Activated CD8-positive, alpha-beta memory T cell treated with anti-CD3 and anti-CD28 coated beads, Interleukin-2, amount 10 ng/mL, durations not matched to agents 7 days and 5 days (primary cell): ENCODE measurements at regions of chr19 and their contacts with region 1.

Region 1: GRCh38 chr19:6125571-6125989 is 9.9 kb upstream of the ACSBG2 start:
- DNase-seq: peak; percentile 75
- ATAC-seq: peak; percentile 72
- H3K4me3 Mint-ChIP-seq: no peak overlapping the region
- H3K27ac Mint-ChIP-seq: no peak overlapping the region
- H3K4me1 Mint-ChIP-seq: no peaks in the 10 kb centered on the region
- H3K27me3 Mint-ChIP-seq: peaks cover 4% of the 10 kb centered on the region

Region 2: DNA sequence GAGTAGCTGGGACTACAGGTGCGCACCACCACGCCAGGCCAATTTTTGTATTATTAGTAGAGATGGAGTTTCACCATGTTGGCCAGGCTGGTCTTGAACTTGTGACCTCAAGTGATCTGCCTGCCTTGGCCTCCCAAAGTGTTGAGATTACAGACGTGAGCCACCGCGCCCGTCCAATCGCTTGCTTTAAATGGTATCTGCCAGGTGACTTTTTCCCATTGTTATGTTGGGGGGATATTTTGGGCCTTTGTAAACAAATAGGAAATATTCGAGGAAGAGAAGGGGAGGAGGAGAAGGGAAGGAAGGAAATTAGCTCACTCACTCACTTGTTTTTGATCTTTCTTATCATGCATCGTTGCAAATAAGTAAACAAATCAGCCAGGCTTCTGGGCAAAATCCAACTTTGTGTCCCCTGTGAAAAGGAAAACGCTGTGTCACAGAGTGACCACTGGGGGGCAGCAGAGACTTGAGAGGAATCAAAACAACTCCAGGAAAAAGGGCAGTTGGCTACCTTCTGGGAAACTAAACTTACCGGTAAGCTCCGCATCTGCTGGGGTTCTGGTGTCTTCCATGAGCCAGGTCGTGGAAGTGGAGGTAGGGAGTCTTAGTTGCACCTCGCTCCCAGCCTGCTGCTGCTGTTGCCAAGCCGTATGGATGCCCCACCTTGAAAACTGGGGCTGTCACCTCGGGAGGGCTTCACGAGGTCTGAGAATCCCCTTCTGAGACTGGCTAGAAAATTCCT is 138.3 kb before region 1 on chr19:
- CTCF ChIA-PET with region 1: interaction called, 22 read pairs
- DNase-seq: peak; percentile 82
- ATAC-seq: peak; percentile 22
- H3K4me3 Mint-ChIP-seq: peak overlapping the region; percentile 64
- H3K27ac Mint-ChIP-seq: peak overlapping the region; percentile 72
- H3K4me1 Mint-ChIP-seq: peaks cover 46% of the 10 kb centered on the region
- H3K27me3 Mint-ChIP-seq: no peaks in the 10 kb centered on the region

Region 3: GRCh38 chr19:6048808-6049405 is 76.7 kb before region 1 on chr19:
- CTCF ChIA-PET with region 1: interaction called, 114 read pairs
- DNase-seq: peak; percentile 81
- ATAC-seq: peak; percentile 100
- H3K4me3 Mint-ChIP-seq: no peak overlapping the region
- H3K27ac Mint-ChIP-seq: no peak overlapping the region
- H3K4me1 Mint-ChIP-seq: peaks cover 4% of the 10 kb centered on the region
- H3K27me3 Mint-ChIP-seq: peaks cover 13% of the 10 kb centered on the region

Region 4: DNA sequence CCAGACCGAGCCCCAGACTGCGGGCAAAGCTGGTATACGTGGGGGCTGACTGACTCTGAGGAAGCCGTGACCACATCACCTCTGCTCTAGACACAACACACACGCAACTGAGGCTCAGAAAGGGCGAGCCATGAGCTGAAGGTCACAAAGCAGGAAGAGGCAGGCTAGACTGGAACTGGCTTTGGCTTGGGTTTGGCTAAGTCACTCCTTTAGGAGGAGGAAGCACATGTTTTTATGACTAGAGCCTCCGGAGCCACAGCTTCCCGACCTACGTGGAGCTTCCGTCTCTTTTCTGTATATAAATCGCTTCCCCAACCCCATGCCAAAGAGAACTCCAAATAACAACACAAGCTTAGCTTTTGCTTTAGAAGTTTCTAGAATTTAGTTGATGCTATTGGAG is 63.3 kb before region 1 on chr19:
- CTCF ChIA-PET with region 1: interaction called, 11 read pairs
- DNase-seq: peak; percentile 62
- ATAC-seq: peak; percentile 44
- H3K4me3 Mint-ChIP-seq: no peak overlapping the region
- H3K27ac Mint-ChIP-seq: no peak overlapping the region
- H3K4me1 Mint-ChIP-seq: peaks cover 37% of the 10 kb centered on the region
- H3K27me3 Mint-ChIP-seq: peaks cover 15% of the 10 kb centered on the region

Region 5: DNA sequence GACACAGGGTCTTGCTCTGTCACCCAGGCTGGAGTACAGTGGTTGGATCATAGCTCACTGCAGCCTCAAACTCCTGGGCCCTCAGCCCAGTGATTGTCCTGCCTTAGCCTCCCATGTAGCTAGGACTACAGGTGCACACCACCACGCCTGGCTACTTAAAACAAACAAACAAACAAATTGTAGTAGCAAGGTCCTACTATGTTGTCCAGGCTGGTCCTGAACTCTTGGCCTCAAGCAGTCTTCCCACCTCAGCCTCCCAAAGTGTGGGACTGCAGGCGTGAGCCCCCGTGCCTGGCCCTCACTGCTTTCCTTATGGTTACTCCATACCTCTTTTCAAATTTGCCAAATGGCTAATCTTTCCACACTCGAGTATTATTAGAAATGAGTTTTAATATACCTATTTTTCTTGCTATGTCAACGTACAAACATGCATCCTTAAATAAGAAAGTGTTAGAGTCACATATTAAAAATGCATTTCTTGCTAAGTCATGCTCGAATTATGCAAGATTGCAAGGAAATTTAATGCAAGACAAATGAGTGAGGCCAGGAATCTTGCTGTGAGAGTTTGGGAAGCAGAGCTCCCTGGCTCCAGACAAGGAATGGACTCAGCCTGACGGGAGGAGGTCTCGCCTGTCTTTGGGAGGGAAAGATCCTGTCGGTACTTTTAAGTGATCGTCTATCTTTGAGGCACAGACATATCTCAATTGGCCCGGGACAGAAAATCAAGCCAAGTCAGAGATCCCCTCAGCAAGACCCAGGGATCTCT is 54.7 kb before region 1 on chr19:
- CTCF ChIA-PET with region 1: interaction called, 10 read pairs
- DNase-seq: peak; percentile 5
- ATAC-seq: peak; percentile 14
- H3K4me3 Mint-ChIP-seq: no peak overlapping the region
- H3K27ac Mint-ChIP-seq: no peak overlapping the region
- H3K4me1 Mint-ChIP-seq: peaks cover 4% of the 10 kb centered on the region
- H3K27me3 Mint-ChIP-seq: peaks cover 12% of the 10 kb centered on the region

Region 6: GRCh38 chr19:6113616-6114188 is 11.9 kb before region 1 on chr19:
- CTCF ChIA-PET with region 1: interaction called, 30 read pairs
- DNase-seq: no peak
- ATAC-seq: no peak
- H3K4me3 Mint-ChIP-seq: no peak overlapping the region
- H3K27ac Mint-ChIP-seq: no peak overlapping the region
- H3K4me1 Mint-ChIP-seq: peaks cover 14% of the 10 kb centered on the region
- H3K27me3 Mint-ChIP-seq: peaks cover 13% of the 10 kb centered on the region

Region 7: DNA sequence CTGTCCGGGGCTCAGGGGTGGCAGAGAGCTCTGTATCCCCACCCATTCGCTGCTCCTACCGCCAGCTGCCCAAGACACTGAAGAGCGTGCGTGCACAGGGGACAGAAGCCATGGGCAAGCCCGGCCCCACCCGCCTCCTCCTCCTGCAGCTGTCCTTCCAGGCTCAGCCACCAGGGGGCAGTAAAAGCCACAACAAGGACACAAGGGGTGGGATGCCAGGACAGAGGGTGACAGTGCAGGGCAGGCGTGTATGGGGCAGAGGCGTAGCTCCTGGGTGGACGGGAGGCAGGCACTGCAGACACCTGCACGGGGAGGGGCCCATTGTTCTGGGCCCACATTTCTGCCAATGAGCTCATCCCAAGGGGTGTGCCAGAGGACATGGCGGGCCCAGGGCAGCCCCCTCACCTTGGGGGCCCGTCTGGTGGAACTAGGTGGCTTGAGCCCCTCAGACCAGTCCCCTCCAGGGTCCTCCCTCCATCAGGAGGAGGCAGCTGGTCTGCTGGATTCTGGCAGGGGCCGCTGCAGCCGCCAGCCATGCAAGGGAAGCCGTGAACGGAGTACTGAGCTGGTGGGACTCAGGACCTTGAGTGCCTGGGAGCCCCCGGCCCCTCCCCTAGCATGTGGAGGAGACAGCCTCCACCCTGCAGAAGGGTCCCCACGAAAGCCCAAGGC is 93.0 kb after region 1 on chr19:
- CTCF ChIA-PET with region 1: interaction called, 11 read pairs
- DNase-seq: peak; percentile 90
- ATAC-seq: peak; percentile 78
- H3K4me3 Mint-ChIP-seq: no peak overlapping the region
- H3K27ac Mint-ChIP-seq: peak overlapping the region; percentile 37
- H3K4me1 Mint-ChIP-seq: no peaks in the 10 kb centered on the region
- H3K27me3 Mint-ChIP-seq: no peaks in the 10 kb centered on the region

Region 8: DNA sequence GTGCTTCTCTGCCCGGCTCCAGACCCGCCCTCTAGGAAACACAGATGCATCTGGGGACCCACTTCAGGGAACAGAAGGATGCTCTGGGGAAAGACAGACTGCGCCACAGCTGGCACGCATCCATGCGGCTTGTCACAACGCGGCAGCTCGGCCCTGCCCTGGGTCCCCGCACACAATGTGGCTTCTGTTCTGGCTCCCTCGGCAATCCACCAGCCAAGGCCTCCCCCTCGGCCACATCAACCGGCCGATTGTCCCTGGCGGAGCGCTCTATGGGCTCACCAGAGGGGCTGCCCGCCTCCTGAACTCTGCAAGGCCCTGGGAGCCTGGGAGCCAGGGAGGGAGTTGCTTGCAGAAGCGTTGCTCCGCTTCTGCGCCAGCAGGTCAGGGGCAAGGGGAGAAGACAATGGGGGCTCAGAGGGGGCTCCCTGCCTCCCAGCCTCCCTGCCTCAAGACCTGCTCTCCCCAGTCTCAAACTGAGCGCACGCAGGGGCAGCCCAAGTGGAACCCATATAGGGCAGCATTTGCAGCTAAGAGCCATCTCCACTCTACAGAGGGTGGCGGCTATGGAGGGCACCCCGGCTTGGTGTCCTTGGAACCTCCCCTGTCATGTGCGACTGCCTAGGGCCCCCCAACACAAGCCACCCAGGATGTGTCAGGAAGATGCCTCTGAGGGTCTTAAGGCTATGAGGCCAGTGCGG is 116.2 kb after region 1 on chr19:
- CTCF ChIA-PET with region 1: no interaction called
- DNase-seq: no peak
- ATAC-seq: no peak
- H3K4me3 Mint-ChIP-seq: no peak overlapping the region
- H3K27ac Mint-ChIP-seq: no peak overlapping the region
- H3K4me1 Mint-ChIP-seq: peaks cover 31% of the 10 kb centered on the region
- H3K27me3 Mint-ChIP-seq: no peaks in the 10 kb centered on the region

Region 9: DNA sequence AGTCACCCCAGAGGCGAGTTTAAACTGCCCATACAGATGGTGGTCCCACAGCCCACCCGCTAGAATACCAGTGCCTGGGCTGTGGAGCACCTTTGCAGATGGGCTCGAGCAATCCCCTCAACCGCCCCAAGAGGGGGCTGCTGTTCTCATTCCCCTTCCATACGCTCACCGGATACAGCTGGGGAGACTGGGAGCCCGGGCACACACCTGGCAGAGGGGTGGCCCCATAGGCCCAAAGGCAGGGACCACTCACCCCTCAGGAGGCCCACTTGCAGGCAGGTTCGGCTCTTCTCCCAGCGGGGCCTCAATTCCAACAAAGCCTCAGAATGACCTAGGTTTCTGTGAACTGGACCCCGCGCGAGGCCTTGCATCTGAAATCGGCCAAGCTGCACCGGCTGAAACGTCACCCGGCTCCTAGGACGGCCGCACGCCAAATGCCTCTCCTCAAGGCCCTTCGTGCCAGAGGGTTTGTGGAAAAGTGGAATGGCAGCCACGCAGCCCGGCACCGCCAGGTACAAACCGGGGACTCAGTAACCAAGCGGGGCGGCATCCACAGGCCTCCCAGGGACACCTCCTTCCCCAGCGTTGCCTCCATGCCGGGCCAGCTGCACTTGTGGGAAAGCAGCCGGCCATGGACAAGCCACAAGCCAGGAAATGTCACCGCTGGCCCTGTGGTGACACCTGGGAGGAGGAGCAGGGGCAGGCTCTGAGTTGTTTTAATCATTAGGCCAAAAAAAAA is 135.5 kb after region 1 on chr19:
- CTCF ChIA-PET with region 1: no interaction called
- DNase-seq: peak; percentile 57
- ATAC-seq: peak; percentile 63
- H3K4me3 Mint-ChIP-seq: no peak overlapping the region
- H3K27ac Mint-ChIP-seq: no peak overlapping the region
- H3K4me1 Mint-ChIP-seq: peaks cover 15% of the 10 kb centered on the region
- H3K27me3 Mint-ChIP-seq: no peaks in the 10 kb centered on the region